PC-3 (cell line): ENCODE measurements at regions of chr4 and their contacts with region 1.

Region 1: DNA sequence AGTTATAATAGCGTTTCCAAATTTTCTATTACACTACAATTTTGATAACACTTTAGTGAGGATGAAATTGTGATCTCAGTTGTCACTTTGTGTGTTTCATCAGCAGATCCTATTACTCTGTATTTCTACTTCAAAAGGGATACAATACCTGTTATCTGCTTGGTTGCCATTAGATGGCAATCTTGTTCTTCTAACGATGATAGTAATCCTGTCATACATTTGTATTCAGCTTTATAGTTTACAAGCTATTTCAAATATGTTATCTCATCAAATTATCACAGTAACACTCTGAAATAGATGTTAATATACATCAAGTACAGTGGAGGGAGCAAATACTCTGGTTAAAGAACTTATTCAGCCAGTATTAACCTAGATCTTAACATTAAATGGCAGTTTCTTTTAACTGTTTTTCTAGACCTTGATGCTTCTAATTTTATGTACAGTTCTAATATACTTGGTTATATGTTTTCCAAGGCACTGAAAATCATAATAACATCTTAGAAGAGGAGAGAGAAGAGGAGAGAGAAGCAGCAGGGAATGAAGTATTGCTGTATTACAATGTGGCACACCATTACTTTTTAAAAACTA is 292.0 kb downstream of the CCSER1 start:
- DNase-seq: peak; percentile 56
- ATAC-seq: peak; percentile 81
- H3K4me3 ChIP-seq: no peak overlapping the region
- H3K27ac ChIP-seq: no peak overlapping the region
- H3K4me1 ChIP-seq: no peaks in the 10 kb centered on the region; the same call in 1 of the 2 replicates
- H3K27me3 ChIP-seq: no peaks in the 10 kb centered on the region
- CTCF ChIP-seq: peak; percentile 78

Region 2: DNA sequence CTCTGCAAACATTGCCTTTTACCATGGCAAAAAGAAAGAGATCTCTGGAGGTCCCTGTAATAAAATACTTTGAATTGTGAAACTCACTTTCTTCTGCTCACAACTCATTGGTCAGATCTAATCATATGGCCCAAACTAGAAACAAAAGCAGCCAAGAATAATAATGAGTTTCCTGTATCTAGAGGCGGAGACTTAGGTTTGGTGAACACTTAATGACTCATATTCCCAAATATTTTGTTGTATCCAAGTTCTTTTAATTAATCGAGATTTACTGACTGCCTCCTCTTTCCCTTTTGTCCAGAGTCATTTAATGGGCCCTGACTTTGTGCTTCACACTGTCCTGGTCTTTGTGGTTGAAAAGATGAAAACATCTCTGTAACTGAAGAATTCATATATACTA is 101.4 kb before region 1 on chr4:
- CTCF ChIA-PET with region 1: no interaction called
- POLR2A ChIA-PET with region 1: no interaction called
- intact Hi-C with region 1: loop called (anchors 5 kb)
- DNase-seq: peak; percentile 77
- ATAC-seq: peak; percentile 56
- H3K4me3 ChIP-seq: peak overlapping the region; percentile 44; the same call in 1 of the 2 replicates
- H3K27ac ChIP-seq: peak overlapping the region; percentile 97
- H3K4me1 ChIP-seq: peaks cover 42% of the 10 kb centered on the region
- H3K27me3 ChIP-seq: no peaks in the 10 kb centered on the region
- CTCF ChIP-seq: no peak

Region 3: GRCh38 chr4:90375081-90375480 is 44.1 kb before region 1 on chr4:
- CTCF ChIA-PET with region 1: no interaction called
- POLR2A ChIA-PET with region 1: no interaction called
- intact Hi-C with region 1: no loop called
- DNase-seq: no peak
- ATAC-seq: no peak
- H3K4me3 ChIP-seq: no peak overlapping the region
- H3K27ac ChIP-seq: no peak overlapping the region
- H3K4me1 ChIP-seq: no peaks in the 10 kb centered on the region
- H3K27me3 ChIP-seq: no peaks in the 10 kb centered on the region
- CTCF ChIP-seq: no peak

Region 4: GRCh38 chr4:90445380-90445779 is 26.2 kb after region 1 on chr4:
- CTCF ChIA-PET with region 1: no interaction called
- POLR2A ChIA-PET with region 1: no interaction called
- intact Hi-C with region 1: no loop called
- DNase-seq: peak; percentile 3
- ATAC-seq: no peak
- H3K4me3 ChIP-seq: peak overlapping the region; percentile 24; the same call in 1 of the 2 replicates
- H3K27ac ChIP-seq: peak overlapping the region; percentile 93
- H3K4me1 ChIP-seq: peaks cover 59% of the 10 kb centered on the region
- H3K27me3 ChIP-seq: no peaks in the 10 kb centered on the region
- CTCF ChIP-seq: no peak

Region 5: GRCh38 chr4:90570615-90571014 is 151.4 kb after region 1 on chr4:
- CTCF ChIA-PET with region 1: no interaction called
- POLR2A ChIA-PET with region 1: no interaction called
- intact Hi-C with region 1: loop called (anchors 1 kb)
- DNase-seq: no peak
- ATAC-seq: no peak; the same call in 1 of the 2 replicates
- H3K4me3 ChIP-seq: no peak overlapping the region
- H3K27ac ChIP-seq: no peak overlapping the region
- H3K4me1 ChIP-seq: no peaks in the 10 kb centered on the region
- H3K27me3 ChIP-seq: no peaks in the 10 kb centered on the region
- CTCF ChIP-seq: 0 out of 2 replicates have a peak, but pooled peaks have one; percentile 9

Region 6: DNA sequence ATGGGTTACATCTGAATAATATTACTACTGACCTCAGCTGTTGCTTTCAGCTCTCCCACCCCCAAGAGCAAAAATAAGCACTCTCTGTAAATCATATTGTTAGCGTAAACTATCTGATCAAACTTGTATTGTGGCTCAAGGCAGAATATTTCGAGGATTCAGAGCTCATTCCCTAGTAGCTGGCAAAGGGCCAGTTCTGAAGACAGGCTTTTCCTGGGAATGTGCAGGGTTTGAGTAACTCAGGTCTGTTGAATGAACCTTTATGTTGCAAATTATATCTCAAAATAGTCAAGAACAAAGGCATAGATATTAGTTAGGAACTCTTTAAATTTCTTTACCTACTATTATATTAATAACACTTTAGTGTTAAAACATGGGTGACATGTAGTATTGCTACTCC is 162.9 kb after region 1 on chr4:
- CTCF ChIA-PET with region 1: no interaction called
- POLR2A ChIA-PET with region 1: no interaction called
- intact Hi-C with region 1: no loop called
- DNase-seq: no peak
- ATAC-seq: no peak
- H3K4me3 ChIP-seq: no peak overlapping the region
- H3K27ac ChIP-seq: no peak overlapping the region
- H3K4me1 ChIP-seq: no peaks in the 10 kb centered on the region
- H3K27me3 ChIP-seq: no peaks in the 10 kb centered on the region
- CTCF ChIP-seq: no peak

Region 7: GRCh38 chr4:91092398-91093090 is 673.3 kb after region 1 on chr4:
- CTCF ChIA-PET with region 1: interaction called, 3 read pairs
- POLR2A ChIA-PET with region 1: no interaction called
- intact Hi-C with region 1: loop called (anchors 5 kb)
- DNase-seq: peak; percentile 61
- ATAC-seq: peak; percentile 37
- H3K4me3 ChIP-seq: no peak overlapping the region
- H3K27ac ChIP-seq: no peak overlapping the region
- H3K4me1 ChIP-seq: peaks cover 9% of the 10 kb centered on the region; the same call in 1 of the 2 replicates
- H3K27me3 ChIP-seq: no peaks in the 10 kb centered on the region
- CTCF ChIP-seq: peak; percentile 23; the same call in 1 of the 2 replicates

Region 8: DNA sequence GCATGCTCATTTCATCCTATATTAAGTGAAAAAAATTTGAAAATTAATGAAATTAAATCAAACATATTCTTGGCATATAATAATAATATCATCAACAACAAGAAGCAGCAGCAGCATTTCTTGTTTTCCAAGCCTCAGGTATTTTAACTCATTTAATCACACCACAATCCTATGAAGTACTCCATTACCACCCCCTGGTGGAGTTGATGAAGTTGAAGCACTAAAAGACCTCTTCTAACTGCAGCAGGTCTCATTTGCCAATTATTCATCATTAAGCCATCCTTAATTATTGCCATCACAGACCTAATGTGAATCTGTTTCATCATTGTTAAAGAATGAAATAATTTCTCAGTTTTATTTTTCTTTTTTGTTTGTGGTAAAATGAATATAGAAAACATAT is 1083.1 kb after region 1 on chr4:
- CTCF ChIA-PET with region 1: no interaction called
- POLR2A ChIA-PET with region 1: no interaction called
- intact Hi-C with region 1: loop called (anchors 1 kb)
- DNase-seq: peak; percentile 45
- ATAC-seq: no peak
- H3K4me3 ChIP-seq: no peak overlapping the region
- H3K27ac ChIP-seq: no peak overlapping the region
- H3K4me1 ChIP-seq: no peaks in the 10 kb centered on the region
- H3K27me3 ChIP-seq: no peaks in the 10 kb centered on the region
- CTCF ChIP-seq: peak; percentile 55

Region 9: GRCh38 chr4:92299152-92299551 is 1879.9 kb after region 1 on chr4:
- CTCF ChIA-PET with region 1: no interaction called
- POLR2A ChIA-PET with region 1: no interaction called
- intact Hi-C with region 1: loop called (anchors 5 kb)
- DNase-seq: peak; percentile 27
- ATAC-seq: no peak
- H3K4me3 ChIP-seq: no peak overlapping the region
- H3K27ac ChIP-seq: no peak overlapping the region
- H3K4me1 ChIP-seq: 0 out of 2 replicates have a peak, but pooled peaks cover 4% of the 10 kb centered on the region
- H3K27me3 ChIP-seq: no peaks in the 10 kb centered on the region
- CTCF ChIP-seq: peak; percentile 63